ENCODE measurements at regions of chr5 and their contacts with region 1.

Region 1: DNA sequence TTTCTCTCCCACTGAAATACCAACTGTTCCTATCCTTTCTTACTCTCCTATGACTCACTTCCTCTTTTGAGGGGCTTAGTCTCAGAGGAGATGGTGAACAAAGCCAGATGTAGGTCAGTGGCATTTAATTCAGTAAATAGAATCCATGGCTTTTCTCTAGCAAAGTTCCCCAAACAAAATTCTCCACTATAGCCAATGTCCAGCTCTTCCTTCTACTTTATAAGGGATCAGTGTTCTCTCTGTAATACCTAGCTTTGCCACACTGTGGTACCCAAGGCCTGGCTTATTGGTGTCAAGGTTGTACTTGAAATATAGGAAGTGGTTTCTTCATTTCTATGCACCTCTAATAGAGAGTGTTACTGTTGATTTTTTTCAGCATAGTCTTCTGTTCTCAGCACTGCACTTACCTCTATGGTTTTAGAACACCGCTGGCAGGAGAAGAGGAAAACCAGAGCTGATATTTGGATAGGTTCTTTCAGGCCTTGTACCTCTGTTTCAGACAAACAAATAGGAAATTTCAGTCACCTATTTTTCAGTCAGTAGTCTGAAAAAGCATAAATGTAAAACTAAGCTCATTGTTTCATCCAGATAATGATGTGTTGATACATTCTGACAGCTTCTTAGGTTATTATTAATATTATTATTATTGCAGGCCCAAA is 40.6 kb upstream of the ITGA2 start:
- DNase-seq: no peak
- ATAC-seq: peak; percentile 80 to 95 (median 92)
- H3K4me3 ChIP-seq: no peak overlapping the region
- H3K27ac ChIP-seq: peak overlapping the region in 1 of 3 donors; percentile 1
- H3K4me1 ChIP-seq: no peaks in the 10 kb centered on the region
- H3K27me3 ChIP-seq: no peaks in the 10 kb centered on the region
- CTCF ChIP-seq: peak; percentile 48 to 76 (median 58)
- POLR2A ChIP-seq: no peak

Region 2: GRCh38 chr5:52787600-52788504 is 160.7 kb before region 1 on chr5 and contains the starts of genes ITGA1 and PELO:
- intact Hi-C with region 1: no loop called
- DNase-seq: peak; percentile 89 to 97 (median 95)
- ATAC-seq: peak; percentile 77 to 93 (median 88)
- H3K4me3 ChIP-seq: peak within 1 kb of the TSS; percentile 58 to 67 (median 65)
- H3K27ac ChIP-seq: peak within 1 kb of the TSS; percentile 88 to 95 (median 92)
- H3K4me1 ChIP-seq: peaks cover 0 to 40% (median 13%) of the 10 kb centered on the region in 4 donors
- H3K27me3 ChIP-seq: no peaks in the 10 kb centered on the region
- CTCF ChIP-seq: peak; percentile 33 to 57 (median 42)
- POLR2A ChIP-seq: peak; percentile 93
- total RNA-seq, gene ITGA1: 66.5 to 116 (median 82.1) TPM
- total RNA-seq, gene PELO: 14.6 to 24.6 (median 17.6) TPM

Region 3: DNA sequence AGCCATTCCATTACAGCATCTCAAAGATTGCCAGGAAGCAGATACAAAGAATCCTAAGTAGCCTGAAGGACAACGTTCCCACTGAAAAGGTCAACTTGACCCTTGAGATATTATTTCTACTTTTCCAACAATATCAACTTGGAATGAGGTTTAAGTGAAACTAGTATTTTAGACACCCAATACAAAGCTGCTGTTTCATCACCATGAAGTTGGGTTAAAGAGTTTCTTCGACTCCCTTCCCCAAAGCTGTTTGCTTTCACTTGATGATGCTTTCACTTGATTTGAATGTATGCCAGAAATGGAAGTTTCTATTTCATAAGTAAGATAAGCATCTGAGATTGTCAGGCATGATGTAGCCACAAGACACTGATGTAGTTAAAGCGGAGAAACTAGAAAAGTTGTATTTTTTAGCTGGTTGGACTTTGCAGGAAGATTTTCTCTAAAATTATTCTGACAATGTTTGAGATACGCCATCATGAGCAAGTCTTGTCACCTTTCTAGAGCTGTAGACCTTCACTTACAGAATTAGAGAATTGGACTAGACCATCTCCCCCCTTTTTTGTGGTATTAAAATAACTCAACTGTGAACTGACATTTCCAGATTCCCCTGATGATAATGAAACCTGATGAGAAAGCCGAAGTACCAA is 140.9 kb after region 1 on chr5:
- intact Hi-C with region 1: loop called in 1 of 2 experiments (anchors 10 kb)
- DNase-seq: no peak
- ATAC-seq: no peak
- H3K4me3 ChIP-seq: no peak overlapping the region
- H3K27ac ChIP-seq: no peak overlapping the region
- H3K4me1 ChIP-seq: no peaks in the 10 kb centered on the region
- H3K27me3 ChIP-seq: no peaks in the 10 kb centered on the region
- CTCF ChIP-seq: no peak
- POLR2A ChIP-seq: no peak